Cardiac septum (tissue), 1 donor: ENCODE measurements at regions of chr4 and their contacts with region 1.

Region 1: DNA sequence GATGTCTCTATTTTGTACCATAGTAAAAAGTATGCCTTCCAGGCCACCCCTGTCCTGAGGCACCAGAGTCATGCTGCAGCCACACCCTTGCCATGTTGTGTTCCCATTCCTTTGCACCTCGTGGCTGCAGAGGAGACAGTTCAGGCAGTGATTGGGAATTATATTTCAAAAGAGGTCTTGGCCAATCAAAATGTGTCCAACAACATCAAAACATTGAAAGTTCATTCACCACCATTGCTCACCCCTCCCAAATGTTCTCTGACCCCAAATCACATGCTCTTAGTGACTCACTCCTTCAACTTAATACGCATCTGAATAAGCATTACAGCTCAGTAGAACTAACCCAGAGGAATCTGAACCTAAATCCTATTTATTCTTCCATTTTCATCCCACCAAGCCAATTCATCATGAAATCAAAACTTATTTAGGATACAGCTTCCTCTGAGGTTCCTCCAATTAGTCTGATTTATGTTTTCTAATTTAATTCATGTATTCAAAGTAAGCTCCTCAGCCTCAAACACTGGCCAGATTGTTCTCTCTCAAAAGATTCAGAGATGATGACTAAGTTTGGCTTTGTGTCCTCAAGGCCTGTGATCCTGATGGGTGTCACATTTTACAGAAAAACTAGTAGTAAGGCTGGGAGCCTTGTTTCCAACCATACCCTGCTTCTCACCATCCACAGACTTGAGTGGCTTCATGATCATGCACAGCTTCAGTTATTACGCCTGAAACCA is 323.2 kb upstream of the INTU start:
- DNase-seq: no peak

Region 2: GRCh38 chr4:127214016-127214415 is 95.5 kb before region 1 on chr4:
- intact Hi-C with region 1: loop called (anchors 10 kb)
- DNase-seq: no peak

Region 3: GRCh38 chr4:127632420-127633403 is 323.2 kb after region 1 on chr4 and contains the start of gene INTU:
- intact Hi-C with region 1: no loop called
- DNase-seq: peak; percentile 96
- total RNA-seq, gene INTU: 4.8 TPM